PC-3 (cell line): ENCODE measurements at regions of chr17 and their contacts with region 1.

Region 1: DNA sequence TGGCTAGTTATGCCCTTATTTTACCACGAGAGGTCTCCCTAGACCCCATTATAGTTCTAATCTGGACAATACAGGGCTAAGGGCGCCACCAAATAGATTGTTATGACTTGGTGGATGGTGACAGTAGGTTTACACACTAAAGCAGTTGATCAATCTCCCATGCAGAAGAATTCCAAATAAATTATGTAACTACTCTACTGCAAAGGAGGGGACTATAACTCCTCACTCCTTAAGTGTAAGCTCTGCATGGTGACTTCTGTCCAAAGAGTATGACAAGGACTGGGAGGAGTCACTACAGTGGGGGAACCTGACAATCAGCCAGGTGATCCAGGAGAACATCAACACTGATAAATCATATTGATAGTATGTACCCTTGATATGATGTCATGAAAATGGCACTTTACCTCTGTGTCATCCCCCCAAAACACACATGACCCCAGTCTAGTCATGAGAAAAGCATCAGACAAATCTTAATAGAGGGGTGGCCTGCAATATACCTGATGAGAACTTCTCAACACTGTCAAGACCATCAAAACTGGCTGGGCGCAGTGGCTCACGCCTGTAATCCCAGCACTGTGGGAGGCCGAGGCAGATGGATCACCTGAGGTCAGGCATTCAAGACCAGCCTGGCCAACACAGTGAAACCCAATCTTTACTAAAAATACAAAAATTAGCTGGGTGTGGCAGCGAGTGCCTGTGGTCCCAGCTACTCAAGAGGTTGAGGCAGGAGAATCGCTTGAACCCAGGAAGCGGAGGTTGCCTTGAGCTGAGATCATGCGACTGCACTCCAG is 20.1 kb upstream of the YPEL2 start:
- DNase-seq: peak; percentile 88
- ATAC-seq: peak; percentile 99
- H3K4me3 ChIP-seq: no peak overlapping the region
- H3K27ac ChIP-seq: no peak overlapping the region
- H3K4me1 ChIP-seq: no peaks in the 10 kb centered on the region
- H3K27me3 ChIP-seq: no peaks in the 10 kb centered on the region
- CTCF ChIP-seq: peak; percentile 96

Region 2: DNA sequence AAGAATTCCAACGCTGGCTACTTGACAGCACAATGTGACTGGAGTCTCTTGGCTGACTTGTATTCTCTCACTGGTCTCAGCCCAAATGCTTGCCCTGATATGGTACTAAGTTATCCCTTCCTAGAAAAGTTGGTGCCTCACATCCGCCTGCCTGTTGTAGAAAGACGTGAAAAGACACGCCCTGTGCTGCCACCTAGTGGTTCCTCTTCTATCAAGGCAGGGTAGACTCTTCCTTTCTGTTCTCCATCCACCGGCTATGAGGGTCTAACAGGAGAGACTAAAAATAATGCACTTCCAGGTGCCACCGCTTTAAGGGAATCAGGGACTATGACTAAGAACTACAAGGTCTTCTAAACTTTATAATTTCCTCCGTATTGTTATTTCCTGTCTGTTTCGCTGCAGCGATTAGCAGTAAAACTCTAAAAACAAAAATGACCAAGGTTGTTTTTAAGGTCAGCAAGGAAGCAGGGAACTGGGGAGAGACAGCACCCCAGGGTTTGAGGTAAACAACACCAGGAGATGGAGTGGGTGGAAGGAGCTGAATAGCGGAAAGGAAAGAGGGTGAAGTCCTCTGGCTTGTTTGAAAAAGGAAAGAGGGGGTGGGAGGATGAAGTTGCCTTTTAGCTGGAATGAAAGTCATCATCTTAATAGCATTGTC is 129.6 kb after region 1 on chr17:
- CTCF ChIA-PET with region 1: interaction called, 7 read pairs
- POLR2A ChIA-PET with region 1: interaction called, 6 read pairs
- intact Hi-C with region 1: loop called (anchors 1 kb)
- DNase-seq: peak; percentile 95
- ATAC-seq: peak; percentile 100
- H3K4me3 ChIP-seq: no peak overlapping the region
- H3K27ac ChIP-seq: no peak overlapping the region
- H3K4me1 ChIP-seq: no peaks in the 10 kb centered on the region
- H3K27me3 ChIP-seq: no peaks in the 10 kb centered on the region
- CTCF ChIP-seq: peak; percentile 97

Region 3: GRCh38 chr17:59521204-59522126 is 210.1 kb after region 1 on chr17:
- CTCF ChIA-PET with region 1: interaction called, 3 read pairs
- POLR2A ChIA-PET with region 1: no interaction called
- intact Hi-C with region 1: loop called (anchors 10 kb)
- DNase-seq: peak; percentile 81
- ATAC-seq: peak; percentile 97
- H3K4me3 ChIP-seq: no peak overlapping the region
- H3K27ac ChIP-seq: no peak overlapping the region
- H3K4me1 ChIP-seq: peaks cover 4% of the 10 kb centered on the region; the same call in 1 of the 2 replicates
- H3K27me3 ChIP-seq: no peaks in the 10 kb centered on the region
- CTCF ChIP-seq: peak; percentile 95